CD4-positive, alpha-beta memory T cell (primary cell): ENCODE measurements at regions of chr1 and their contacts with region 1.

Region 1: GRCh38 chr1:159891275-159892157 is 8.4 kb downstream of the CFAP45 start:
- DNase-seq: peak; percentile 67 to 74 (median 72)
- H3K4me3 ChIP-seq: no peak overlapping the region
- H3K4me3 Mint-ChIP-seq: no peak overlapping the region
- H3K27ac ChIP-seq: no peak overlapping the region
- H3K27ac Mint-ChIP-seq: peak overlapping the region in 3 of 7 donors; percentile 39 to 85 (median 68)
- H3K4me1 ChIP-seq: peaks cover 17% of the 10 kb centered on the region
- H3K4me1 Mint-ChIP-seq: peaks cover 13 to 22% (median 17%) of the 10 kb centered on the region in 4 donors
- H3K27me3 ChIP-seq: no peaks in the 10 kb centered on the region
- H3K27me3 Mint-ChIP-seq: no peaks in the 10 kb centered on the region

Region 2: DNA sequence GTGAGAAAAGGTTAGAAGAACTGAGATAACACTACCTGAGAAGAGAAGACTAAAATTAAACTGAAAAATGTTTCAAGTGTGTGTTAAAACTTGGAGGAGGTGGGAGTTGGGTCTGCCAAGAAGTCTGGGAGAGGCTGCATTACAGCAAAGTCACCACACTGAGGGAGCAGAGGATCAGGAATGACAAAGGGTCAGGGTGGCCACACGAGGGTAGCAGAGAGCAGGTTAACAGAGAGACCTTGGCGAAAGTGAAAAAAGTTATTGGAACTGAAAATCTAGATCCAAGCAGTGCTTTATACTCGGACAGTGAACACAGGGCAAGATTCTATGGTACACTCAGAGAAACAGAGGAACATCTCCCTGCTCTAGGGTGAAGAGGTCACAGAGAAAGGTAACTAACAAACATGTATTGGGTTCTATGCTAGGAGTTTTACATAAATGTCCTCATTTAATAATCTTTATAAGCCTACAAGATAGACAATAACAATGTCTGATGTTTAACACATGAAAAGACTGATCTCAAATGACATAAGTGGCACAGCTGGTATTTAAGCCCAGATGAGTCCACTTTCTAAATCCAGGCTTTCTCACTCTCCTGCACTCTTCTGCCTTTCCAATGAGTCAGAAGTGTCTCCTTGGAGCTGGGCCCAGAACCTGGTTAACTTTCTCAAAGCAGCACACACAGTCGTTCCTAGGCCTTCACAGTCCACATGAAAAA is 730.4 kb before region 1 on chr1:
- CTCF ChIA-PET with region 1: interaction called, 4 read pairs
- POLR2A ChIA-PET with region 1: no interaction called
- intact Hi-C with region 1: loop called (anchors 1 kb)
- DNase-seq: peak; percentile 32 to 49 (median 46)
- H3K4me3 ChIP-seq: no peak overlapping the region
- H3K4me3 Mint-ChIP-seq: no peak overlapping the region
- H3K27ac ChIP-seq: no peak overlapping the region
- H3K27ac Mint-ChIP-seq: no peak overlapping the region
- H3K4me1 ChIP-seq: no peaks in the 10 kb centered on the region
- H3K4me1 Mint-ChIP-seq: peaks cover 0 to 5% (median 2%) of the 10 kb centered on the region in 4 donors
- H3K27me3 ChIP-seq: peaks cover 5% of the 10 kb centered on the region
- H3K27me3 Mint-ChIP-seq: peaks cover 28 to 30% of the 10 kb centered on the region in 2 donors

Region 3: DNA sequence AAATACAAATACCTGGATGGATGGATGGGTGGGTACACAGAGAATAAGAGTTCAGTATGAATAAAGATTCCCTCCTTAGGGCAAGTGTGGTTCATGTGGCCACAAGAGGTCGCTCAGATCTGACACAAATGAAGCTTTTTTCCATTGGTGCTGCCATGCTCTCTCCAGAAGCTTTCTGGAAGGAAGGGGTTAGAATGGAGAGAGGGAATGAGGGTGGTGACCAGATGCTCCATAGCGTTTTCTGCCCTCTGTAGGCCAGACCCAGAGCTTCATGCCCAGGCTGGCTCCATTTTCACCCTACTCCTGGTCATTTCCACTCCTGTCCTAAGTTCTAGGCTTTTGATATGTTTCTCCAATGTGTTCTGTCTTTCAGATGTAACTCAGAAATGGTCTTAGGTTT is 92.6 kb before region 1 on chr1:
- CTCF ChIA-PET with region 1: interaction called, 571 read pairs
- POLR2A ChIA-PET with region 1: interaction called, 21 read pairs
- intact Hi-C with region 1: loop called (anchors 1 kb)
- DNase-seq: peak in 4 of 5 donors; percentile 35 to 48 (median 42)
- H3K4me3 ChIP-seq: no peak overlapping the region
- H3K4me3 Mint-ChIP-seq: peak overlapping the region in 1 of 8 donors; percentile 18
- H3K27ac ChIP-seq: no peak overlapping the region
- H3K27ac Mint-ChIP-seq: peak overlapping the region in 1 of 7 donors; percentile 36
- H3K4me1 ChIP-seq: peaks cover 23% of the 10 kb centered on the region
- H3K4me1 Mint-ChIP-seq: peaks cover 22 to 39% (median 28%) of the 10 kb centered on the region in 4 donors
- H3K27me3 ChIP-seq: no peaks in the 10 kb centered on the region
- H3K27me3 Mint-ChIP-seq: peaks cover 2 to 6% of the 10 kb centered on the region in 2 donors

Region 4: GRCh38 chr1:159902551-159902950 is 11.0 kb after region 1 on chr1:
- CTCF ChIA-PET with region 1: interaction called, 15 read pairs
- POLR2A ChIA-PET with region 1: no interaction called
- intact Hi-C with region 1: no loop called
- DNase-seq: no peak
- H3K4me3 ChIP-seq: no peak overlapping the region
- H3K4me3 Mint-ChIP-seq: no peak overlapping the region
- H3K27ac ChIP-seq: no peak overlapping the region
- H3K27ac Mint-ChIP-seq: no peak overlapping the region
- H3K4me1 ChIP-seq: no peaks in the 10 kb centered on the region
- H3K4me1 Mint-ChIP-seq: peaks cover 5 to 14% (median 7%) of the 10 kb centered on the region in 4 donors
- H3K27me3 ChIP-seq: no peaks in the 10 kb centered on the region
- H3K27me3 Mint-ChIP-seq: peaks cover 0 to 2% of the 10 kb centered on the region in 2 donors

Region 5: DNA sequence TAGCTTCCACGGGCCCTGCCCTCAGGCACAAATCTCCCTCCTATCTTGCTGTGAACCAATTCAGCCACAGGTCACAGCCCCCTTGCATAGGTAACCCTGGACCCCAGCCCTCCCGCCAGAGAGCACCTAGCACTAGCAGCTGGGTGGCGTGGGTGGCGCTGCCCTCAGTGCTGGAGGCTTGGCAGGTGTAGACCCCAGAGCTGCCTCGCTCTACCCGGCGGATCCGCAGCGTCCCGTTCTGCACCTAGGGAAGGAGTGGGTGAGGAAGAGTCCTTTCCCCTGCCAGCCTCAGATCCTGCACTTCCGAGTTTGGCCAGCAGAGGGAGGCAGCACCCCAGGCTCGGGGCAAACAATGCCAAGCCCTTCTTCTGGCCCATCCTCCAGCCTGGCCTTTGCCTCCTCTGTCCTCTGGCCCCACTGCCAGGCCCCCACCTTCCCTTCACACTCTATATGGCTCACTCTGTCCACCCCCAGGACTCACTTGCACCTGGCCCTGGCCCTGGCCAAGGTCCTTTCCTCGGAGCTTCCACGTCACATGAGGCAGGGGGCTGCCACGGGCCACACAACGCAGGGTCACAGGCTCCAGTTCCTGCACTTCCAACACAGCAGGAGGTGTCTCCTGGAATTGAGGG is 44.9 kb after region 1 on chr1:
- CTCF ChIA-PET with region 1: interaction called, 14 read pairs
- POLR2A ChIA-PET with region 1: no interaction called
- intact Hi-C with region 1: no loop called
- DNase-seq: peak; percentile 69 to 81 (median 73)
- H3K4me3 ChIP-seq: no peak overlapping the region
- H3K4me3 Mint-ChIP-seq: peak overlapping the region in 1 of 8 donors; percentile 26
- H3K27ac ChIP-seq: no peak overlapping the region
- H3K27ac Mint-ChIP-seq: peak overlapping the region in 3 of 7 donors; percentile 40 to 68 (median 45)
- H3K4me1 ChIP-seq: peaks cover 15% of the 10 kb centered on the region
- H3K4me1 Mint-ChIP-seq: peaks cover 0 to 7% (median 3%) of the 10 kb centered on the region in 4 donors
- H3K27me3 ChIP-seq: no peaks in the 10 kb centered on the region
- H3K27me3 Mint-ChIP-seq: peaks cover 6 to 10% of the 10 kb centered on the region in 2 donors

Region 6: GRCh38 chr1:160177231-160177630 is 285.7 kb after region 1 on chr1:
- CTCF ChIA-PET with region 1: no interaction called
- POLR2A ChIA-PET with region 1: no interaction called
- intact Hi-C with region 1: no loop called
- DNase-seq: no peak
- H3K4me3 ChIP-seq: no peak overlapping the region
- H3K4me3 Mint-ChIP-seq: no peak overlapping the region
- H3K27ac ChIP-seq: no peak overlapping the region
- H3K27ac Mint-ChIP-seq: no peak overlapping the region
- H3K4me1 ChIP-seq: no peaks in the 10 kb centered on the region
- H3K4me1 Mint-ChIP-seq: peaks cover 0 to 10% (median 4%) of the 10 kb centered on the region in 4 donors
- H3K27me3 ChIP-seq: no peaks in the 10 kb centered on the region
- H3K27me3 Mint-ChIP-seq: peaks cover 12 to 15% of the 10 kb centered on the region in 2 donors